ENCODE measurements at regions of chr5 and their contacts with region 1.

Region 1: GRCh38 chr5:138789771-138790242 is 36.6 kb downstream of the CTNNA1 start:
- DNase-seq: no peak
- ATAC-seq: peak; percentile 95
- H3K4me3 ChIP-seq: no peak overlapping the region
- H3K27ac ChIP-seq: no peak overlapping the region
- H3K4me1 ChIP-seq: peaks cover 12% of the 10 kb centered on the region
- H3K27me3 ChIP-seq: no peaks in the 10 kb centered on the region
- CTCF ChIP-seq: peak; percentile 56 to 73 (median 62)
- EP300 ChIP-seq: no peak
- POLR2A ChIP-seq: no peak
- RAD21 ChIP-seq: peak; percentile 31; the same call in 1 of the 2 replicates

Region 2: GRCh38 chr5:138702308-138703077 is 87.3 kb before region 1 on chr5:
- CTCF ChIA-PET with region 1: interaction called, 11 read pairs
- POLR2A ChIA-PET with region 1: no interaction called
- RAD21 ChIA-PET with region 1: no interaction called
- SMC1A ChIA-PET with region 1: interaction called, 3 read pairs
- in situ Hi-C with region 1: no loop called
- intact Hi-C with region 1: no loop called
- DNase-seq: no peak
- ATAC-seq: no peak
- H3K4me3 ChIP-seq: no peak overlapping the region
- H3K27ac ChIP-seq: no peak overlapping the region
- H3K4me1 ChIP-seq: no peaks in the 10 kb centered on the region
- H3K27me3 ChIP-seq: no peaks in the 10 kb centered on the region; a peak in 1 of 4 replicates
- CTCF ChIP-seq: no peak
- EP300 ChIP-seq: no peak
- POLR2A ChIP-seq: no peak
- RAD21 ChIP-seq: 0 out of 2 replicates have a peak, but pooled peaks have one; percentile 2

Region 3: GRCh38 chr5:138772986-138773594 is 16.7 kb before region 1 on chr5:
- CTCF ChIA-PET with region 1: interaction called, 34 read pairs
- POLR2A ChIA-PET with region 1: interaction called, 3 read pairs
- RAD21 ChIA-PET with region 1: interaction called, 4 read pairs
- SMC1A ChIA-PET with region 1: interaction called, 4 read pairs
- in situ Hi-C with region 1: no loop called
- intact Hi-C with region 1: no loop called
- DNase-seq: no peak
- ATAC-seq: no peak
- H3K4me3 ChIP-seq: no peak overlapping the region
- H3K27ac ChIP-seq: no peak overlapping the region
- H3K4me1 ChIP-seq: no peaks in the 10 kb centered on the region
- H3K27me3 ChIP-seq: no peaks in the 10 kb centered on the region
- CTCF ChIP-seq: no peak
- EP300 ChIP-seq: no peak
- POLR2A ChIP-seq: no peak
- RAD21 ChIP-seq: no peak

Region 4: DNA sequence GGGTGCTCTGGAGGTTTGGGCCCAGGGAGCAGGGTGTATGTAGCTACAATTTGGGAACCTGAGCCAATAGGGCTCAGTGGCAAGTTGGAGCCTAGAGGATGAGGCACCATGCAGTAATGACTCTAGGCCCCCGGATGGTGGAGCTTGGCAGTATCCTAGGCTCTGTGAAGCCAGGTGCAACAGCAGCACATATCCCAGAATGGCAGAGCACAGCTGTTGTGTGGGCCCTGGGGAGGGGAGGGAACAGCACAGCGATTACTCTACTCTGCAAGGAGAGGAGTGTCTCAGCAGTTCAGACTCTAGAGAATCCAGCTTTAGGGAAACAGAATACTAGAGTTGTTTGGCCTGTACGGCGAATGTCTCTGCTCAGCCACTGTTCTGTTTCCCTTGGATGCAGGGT is 29.3 kb after region 1 on chr5:
- CTCF ChIA-PET with region 1: interaction called, 45 read pairs
- POLR2A ChIA-PET with region 1: no interaction called
- RAD21 ChIA-PET with region 1: no interaction called
- SMC1A ChIA-PET with region 1: interaction called, 3 read pairs
- in situ Hi-C with region 1: no loop called
- intact Hi-C with region 1: no loop called
- DNase-seq: no peak
- ATAC-seq: no peak
- H3K4me3 ChIP-seq: no peak overlapping the region
- H3K27ac ChIP-seq: no peak overlapping the region
- H3K4me1 ChIP-seq: no peaks in the 10 kb centered on the region
- H3K27me3 ChIP-seq: no peaks in the 10 kb centered on the region
- CTCF ChIP-seq: no peak
- EP300 ChIP-seq: no peak
- POLR2A ChIP-seq: no peak
- RAD21 ChIP-seq: no peak

Region 5: DNA sequence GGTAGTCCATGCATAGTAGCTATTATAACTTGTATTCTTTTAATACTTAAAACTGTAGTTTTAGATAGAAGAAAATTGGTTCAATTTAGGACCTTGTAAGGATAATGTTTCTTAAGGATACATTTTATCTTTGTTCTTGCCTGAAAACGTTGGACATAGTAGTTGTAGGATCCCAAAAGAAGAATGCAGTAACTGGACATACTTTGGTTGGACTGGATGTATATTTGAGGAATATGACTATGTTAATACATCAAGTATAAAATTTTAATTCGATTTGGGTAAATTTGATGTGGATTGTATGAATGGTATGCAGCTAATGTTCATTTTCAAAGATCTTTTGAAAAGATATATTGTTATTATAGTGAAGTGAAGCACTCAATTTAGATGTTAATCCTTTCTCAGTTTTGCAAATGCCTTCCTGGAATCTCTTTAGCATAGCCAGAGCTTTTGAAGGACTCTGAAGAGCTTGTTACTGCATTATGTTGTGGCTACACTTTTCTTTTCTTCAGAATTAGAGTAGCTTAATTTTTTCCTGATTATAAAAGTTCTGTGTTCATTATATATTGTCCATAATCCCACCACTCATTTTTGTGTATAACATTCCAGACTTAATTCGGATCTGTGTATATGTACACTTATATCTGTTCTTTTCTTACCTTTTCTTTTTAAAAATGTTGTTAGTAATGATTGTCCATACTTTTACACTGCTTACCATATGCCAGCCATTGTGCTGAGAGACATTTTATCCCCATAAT is 44.1 kb after region 1 on chr5:
- CTCF ChIA-PET with region 1: interaction called, 15 read pairs
- POLR2A ChIA-PET with region 1: no interaction called
- RAD21 ChIA-PET with region 1: no interaction called
- SMC1A ChIA-PET with region 1: no interaction called
- in situ Hi-C with region 1: no loop called
- intact Hi-C with region 1: no loop called
- DNase-seq: no peak
- ATAC-seq: no peak
- H3K4me3 ChIP-seq: no peak overlapping the region
- H3K27ac ChIP-seq: no peak overlapping the region
- H3K4me1 ChIP-seq: no peaks in the 10 kb centered on the region
- H3K27me3 ChIP-seq: no peaks in the 10 kb centered on the region
- CTCF ChIP-seq: no peak
- EP300 ChIP-seq: no peak
- POLR2A ChIP-seq: no peak
- RAD21 ChIP-seq: no peak

Measured in GM12878 (cell line).